ENCODE measurements at regions of chr10 and their contacts with region 1.

Region 1: GRCh38 chr10:100743626-100744135 is 1.7 kb upstream of the PAX2 start:
- DNase-seq: peak; percentile 80
- ATAC-seq: peak; percentile 69
- H3K4me3 ChIP-seq: no peak overlapping the region
- H3K27ac ChIP-seq: no peak overlapping the region
- H3K4me1 ChIP-seq: peaks cover 8 to 31% of the 10 kb centered on the region in 2 experiments; a peak in 3 of 4 replicates
- H3K27me3 ChIP-seq: no peaks in the 10 kb centered on the region
- CTCF ChIP-seq: peak; percentile 98 to 99 (median 98)
- POLR2A ChIP-seq: no peak
- RAD21 ChIP-seq: peak; percentile 98

Region 2: GRCh38 chr10:100562008-100562711 is 181.5 kb before region 1 on chr10:
- CTCF ChIA-PET with region 1: interaction called, 60 read pairs
- POLR2A ChIA-PET with region 1: interaction called, 3 read pairs
- RAD21 ChIA-PET with region 1: interaction called, 5 read pairs
- intact Hi-C with region 1: loop called (anchors 1 kb)
- DNase-seq: peak; percentile 74
- ATAC-seq: peak; percentile 95
- H3K4me3 ChIP-seq: no peak overlapping the region
- H3K27ac ChIP-seq: no peak overlapping the region
- H3K4me1 ChIP-seq: peaks cover 0 to 10% of the 10 kb centered on the region in 2 experiments; a peak in 2 of 4 replicates
- H3K27me3 ChIP-seq: no peaks in the 10 kb centered on the region
- CTCF ChIP-seq: peak; percentile 99 to 100 (median 100)
- POLR2A ChIP-seq: no peak
- RAD21 ChIP-seq: peak; percentile 100

Region 3: GRCh38 chr10:100637785-100638184 is 105.9 kb before region 1 on chr10:
- CTCF ChIA-PET with region 1: interaction called, 13 read pairs
- POLR2A ChIA-PET with region 1: no interaction called
- RAD21 ChIA-PET with region 1: no interaction called
- intact Hi-C with region 1: loop called (anchors 5 kb)
- DNase-seq: peak; percentile 56
- ATAC-seq: peak; percentile 99
- H3K4me3 ChIP-seq: no peak overlapping the region
- H3K27ac ChIP-seq: no peak overlapping the region
- H3K4me1 ChIP-seq: peaks cover 0 to 10% of the 10 kb centered on the region in 2 experiments; a peak in 2 of 4 replicates
- H3K27me3 ChIP-seq: no peaks in the 10 kb centered on the region
- CTCF ChIP-seq: peak; percentile 89 to 98 (median 98)
- POLR2A ChIP-seq: no peak
- RAD21 ChIP-seq: peak; percentile 74

Region 4: GRCh38 chr10:100728928-100729861 is 14.5 kb before region 1 on chr10:
- CTCF ChIA-PET with region 1: interaction called, 18 read pairs
- POLR2A ChIA-PET with region 1: interaction called, 5 read pairs
- RAD21 ChIA-PET with region 1: interaction called in 1 of 2 experiments, 3 read pairs
- intact Hi-C with region 1: loop called (anchors 1 kb)
- DNase-seq: peak; percentile 87
- ATAC-seq: peak; percentile 85
- H3K4me3 ChIP-seq: peak overlapping the region; percentile 52 to 62
- H3K27ac ChIP-seq: peak overlapping the region; percentile 37
- H3K4me1 ChIP-seq: peaks cover 32 to 37% of the 10 kb centered on the region in 2 experiments
- H3K27me3 ChIP-seq: no peaks in the 10 kb centered on the region
- CTCF ChIP-seq: peak; percentile 61 to 93 (median 82)
- POLR2A ChIP-seq: no peak
- RAD21 ChIP-seq: peak; percentile 78

Region 5: GRCh38 chr10:100872034-100872791 is 128.5 kb after region 1 on chr10:
- CTCF ChIA-PET with region 1: interaction called, 14 read pairs
- POLR2A ChIA-PET with region 1: no interaction called
- RAD21 ChIA-PET with region 1: no interaction called
- intact Hi-C with region 1: no loop called
- DNase-seq: peak; percentile 51
- ATAC-seq: peak; percentile 96
- H3K4me3 ChIP-seq: no peak overlapping the region
- H3K27ac ChIP-seq: no peak overlapping the region
- H3K4me1 ChIP-seq: peaks cover 0 to 7% of the 10 kb centered on the region in 2 experiments; a peak in 1 of 4 replicates
- H3K27me3 ChIP-seq: no peaks in the 10 kb centered on the region
- CTCF ChIP-seq: peak; percentile 88 to 95 (median 94)
- POLR2A ChIP-seq: no peak
- RAD21 ChIP-seq: peak; percentile 94

Measured in HCT116 (cell line).